ENCODE measurements at regions of chr16 and their contacts with region 1.

Region 1: DNA sequence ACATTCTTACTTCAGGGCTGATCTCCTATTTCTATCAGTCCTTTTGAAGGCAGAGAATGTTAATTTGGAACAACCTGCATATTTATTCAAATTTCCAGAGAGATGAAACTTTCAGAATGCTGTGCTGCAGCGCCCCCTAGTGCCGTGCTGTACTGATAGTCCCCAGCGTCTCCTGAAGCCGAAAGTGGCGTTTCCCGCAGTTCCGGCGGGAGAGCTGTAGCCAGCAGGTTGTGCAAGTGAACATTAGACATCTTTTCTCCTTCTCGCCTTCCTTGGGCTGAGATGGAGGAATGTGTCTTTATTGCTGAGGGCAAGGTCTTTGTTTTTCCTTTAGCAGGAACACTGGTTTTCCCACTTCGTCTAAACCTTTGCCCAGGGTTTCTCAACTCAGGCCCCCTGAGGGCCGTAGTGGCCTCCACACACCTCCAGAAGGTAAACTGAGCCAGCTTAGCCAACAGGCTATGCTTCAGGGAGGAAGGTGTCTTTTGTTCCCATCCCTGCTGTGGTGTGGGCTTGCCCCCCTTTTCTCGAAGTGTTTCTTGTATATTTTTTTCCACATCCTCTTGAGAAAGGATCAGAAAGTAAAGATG is 26.4 kb downstream of the USP10 start:
- DNase-seq: peak; percentile 82 to 90 (median 89)
- H3K4me3 ChIP-seq: peak overlapping the region; percentile 41 to 73 (median 44)
- H3K4me3 Mint-ChIP-seq: peak overlapping the region; percentile 74 to 85
- H3K27ac ChIP-seq: peak overlapping the region; percentile 75 to 82
- H3K27ac Mint-ChIP-seq: peak overlapping the region; percentile 83 to 93 (median 91)
- H3K4me1 ChIP-seq: peaks cover 50 to 74% of the 10 kb centered on the region in 2 donors
- H3K4me1 Mint-ChIP-seq: peaks cover 77% of the 10 kb centered on the region
- H3K27me3 ChIP-seq: no peaks in the 10 kb centered on the region
- H3K27me3 Mint-ChIP-seq: peaks cover 0 to 2% (median 0%) of the 10 kb centered on the region in 3 donors
- CTCF ChIP-seq: peak; percentile 97

Region 2: GRCh38 chr16:84277237-84277823 is 448.8 kb before region 1 on chr16:
- intact Hi-C with region 1: loop called in 1 of 2 experiments (anchors 10 kb)
- DNase-seq: peak; percentile 30 to 60 (median 54)
- H3K4me3 ChIP-seq: no peak overlapping the region
- H3K4me3 Mint-ChIP-seq: no peak overlapping the region
- H3K27ac ChIP-seq: no peak overlapping the region
- H3K27ac Mint-ChIP-seq: no peak overlapping the region
- H3K4me1 ChIP-seq: no peaks in the 10 kb centered on the region
- H3K4me1 Mint-ChIP-seq: no peaks in the 10 kb centered on the region
- H3K27me3 ChIP-seq: no peaks in the 10 kb centered on the region
- H3K27me3 Mint-ChIP-seq: peaks cover 2 to 10% (median 3%) of the 10 kb centered on the region in 3 donors
- CTCF ChIP-seq: peak; percentile 93

Region 3: GRCh38 chr16:84511180-84511824 is 214.9 kb before region 1 on chr16:
- intact Hi-C with region 1: loop called in 1 of 2 experiments (anchors 5 kb)
- DNase-seq: peak; percentile 77 to 86 (median 81)
- H3K4me3 ChIP-seq: no peak overlapping the region
- H3K4me3 Mint-ChIP-seq: no peak overlapping the region
- H3K27ac ChIP-seq: no peak overlapping the region
- H3K27ac Mint-ChIP-seq: peak overlapping the region in 2 of 7 donors; percentile 49 to 55
- H3K4me1 ChIP-seq: peaks cover 40 to 42% of the 10 kb centered on the region in 2 donors
- H3K4me1 Mint-ChIP-seq: peaks cover 31% of the 10 kb centered on the region
- H3K27me3 ChIP-seq: no peaks in the 10 kb centered on the region
- H3K27me3 Mint-ChIP-seq: peaks cover 0 to 8% (median 0%) of the 10 kb centered on the region in 3 donors
- CTCF ChIP-seq: peak; percentile 95

Region 4: DNA sequence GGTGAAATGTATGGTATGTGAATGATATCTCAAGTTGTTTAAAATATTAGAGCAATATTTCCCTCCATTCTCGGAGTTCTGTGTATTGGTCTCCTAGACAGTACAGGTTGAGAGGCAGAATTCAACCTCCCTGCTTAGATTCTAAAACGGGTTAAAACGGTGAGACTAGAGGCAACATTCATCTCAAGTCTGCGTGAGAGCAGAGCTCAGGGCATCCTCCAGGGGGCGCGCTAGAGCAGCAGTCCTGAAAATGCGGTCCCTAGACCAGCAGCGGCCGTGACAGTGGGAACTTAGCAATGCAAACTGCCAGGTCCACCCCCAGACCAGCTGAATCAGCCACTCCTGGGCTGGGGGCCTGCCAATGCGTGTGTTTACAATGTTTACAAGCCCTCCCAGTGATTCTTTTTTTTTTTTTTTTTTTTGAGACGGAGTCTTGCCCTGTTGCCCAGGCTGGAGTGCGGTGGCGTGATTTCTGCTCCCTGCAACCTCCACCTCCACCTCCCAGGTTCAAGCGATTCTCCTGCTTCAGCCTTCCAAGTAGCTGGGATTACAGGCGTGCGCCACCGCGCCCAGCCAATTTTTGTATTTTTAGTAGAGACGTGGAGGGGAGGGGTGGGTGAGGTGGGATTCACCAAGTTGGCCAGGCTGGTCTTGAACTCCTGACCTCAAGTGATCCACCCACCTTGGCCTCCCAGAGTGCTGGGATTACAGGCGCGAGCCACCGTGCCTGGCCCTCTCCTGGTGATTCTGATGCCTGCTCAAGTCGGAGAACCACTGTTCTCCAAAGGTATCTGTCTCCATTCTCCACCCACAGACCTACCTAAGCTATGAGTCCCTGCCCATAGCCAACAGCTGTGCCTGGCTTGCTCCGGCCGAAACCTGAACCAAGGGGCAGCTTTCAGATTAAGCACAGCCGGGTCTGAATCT is 53.6 kb before region 1 on chr16:
- intact Hi-C with region 1: loop called (anchors 1 to 2 kb)
- DNase-seq: peak; percentile 74 to 86 (median 80)
- H3K4me3 ChIP-seq: no peak overlapping the region
- H3K4me3 Mint-ChIP-seq: peak overlapping the region in 1 of 2 donors; percentile 42
- H3K27ac ChIP-seq: no peak overlapping the region
- H3K27ac Mint-ChIP-seq: no peak overlapping the region
- H3K4me1 ChIP-seq: peaks cover 4 to 12% of the 10 kb centered on the region in 2 donors
- H3K4me1 Mint-ChIP-seq: peaks cover 16% of the 10 kb centered on the region
- H3K27me3 ChIP-seq: no peaks in the 10 kb centered on the region
- H3K27me3 Mint-ChIP-seq: peaks cover 0 to 11% (median 3%) of the 10 kb centered on the region in 3 donors
- CTCF ChIP-seq: peak; percentile 86

Region 5: GRCh38 chr16:84687715-84688114 is 38.5 kb before region 1 on chr16:
- intact Hi-C with region 1: loop called in 1 of 2 experiments (anchors 5 kb)
- DNase-seq: peak; percentile 80 to 90 (median 83)
- H3K4me3 ChIP-seq: no peak overlapping the region
- H3K4me3 Mint-ChIP-seq: no peak overlapping the region
- H3K27ac ChIP-seq: peak overlapping the region in 1 of 2 donors; percentile 14
- H3K27ac Mint-ChIP-seq: peak overlapping the region; percentile 19 to 90 (median 81)
- H3K4me1 ChIP-seq: peaks cover 25 to 39% of the 10 kb centered on the region in 2 donors
- H3K4me1 Mint-ChIP-seq: peaks cover 36% of the 10 kb centered on the region
- H3K27me3 ChIP-seq: no peaks in the 10 kb centered on the region
- H3K27me3 Mint-ChIP-seq: peaks cover 1 to 3% (median 3%) of the 10 kb centered on the region in 3 donors
- CTCF ChIP-seq: no peak

Region 6: DNA sequence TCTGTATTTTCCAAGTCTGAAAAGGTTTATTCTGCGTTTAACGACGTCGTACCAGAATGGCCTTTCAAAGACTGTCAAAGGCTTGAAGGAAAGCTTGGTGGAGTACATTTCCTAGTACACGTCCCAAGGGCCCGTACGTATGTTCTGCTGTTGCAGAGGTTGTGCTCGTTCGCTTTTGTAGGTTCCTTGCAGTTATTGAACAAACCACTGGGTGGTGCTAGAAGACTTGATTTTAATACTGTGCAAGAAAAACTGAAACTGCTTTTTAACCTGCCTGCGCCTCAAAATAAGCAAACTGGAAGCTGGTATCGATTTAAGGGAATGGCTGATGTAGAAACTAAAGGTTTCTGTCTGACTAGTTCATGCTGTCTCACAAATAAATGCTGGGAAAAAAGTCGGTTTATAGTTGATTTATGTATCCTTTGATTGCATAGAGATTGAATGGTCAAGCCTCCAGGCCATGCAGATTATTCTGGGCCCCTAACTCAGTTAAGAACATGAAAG is 28.2 kb after region 1 on chr16:
- intact Hi-C with region 1: no loop called
- DNase-seq: peak; percentile 78 to 88 (median 81)
- H3K4me3 ChIP-seq: peak overlapping the region; percentile 6 to 68 (median 33)
- H3K4me3 Mint-ChIP-seq: peak overlapping the region; percentile 58 to 86
- H3K27ac ChIP-seq: peak overlapping the region; percentile 63 to 92
- H3K27ac Mint-ChIP-seq: peak overlapping the region; percentile 65 to 97 (median 88)
- H3K4me1 ChIP-seq: peaks cover 66 to 72% of the 10 kb centered on the region in 2 donors
- H3K4me1 Mint-ChIP-seq: peaks cover 71% of the 10 kb centered on the region
- H3K27me3 ChIP-seq: no peaks in the 10 kb centered on the region
- H3K27me3 Mint-ChIP-seq: no peaks in the 10 kb centered on the region
- CTCF ChIP-seq: peak; percentile 88